ENCODE measurements at regions of chr1 and their contacts with region 1.

Region 1: DNA sequence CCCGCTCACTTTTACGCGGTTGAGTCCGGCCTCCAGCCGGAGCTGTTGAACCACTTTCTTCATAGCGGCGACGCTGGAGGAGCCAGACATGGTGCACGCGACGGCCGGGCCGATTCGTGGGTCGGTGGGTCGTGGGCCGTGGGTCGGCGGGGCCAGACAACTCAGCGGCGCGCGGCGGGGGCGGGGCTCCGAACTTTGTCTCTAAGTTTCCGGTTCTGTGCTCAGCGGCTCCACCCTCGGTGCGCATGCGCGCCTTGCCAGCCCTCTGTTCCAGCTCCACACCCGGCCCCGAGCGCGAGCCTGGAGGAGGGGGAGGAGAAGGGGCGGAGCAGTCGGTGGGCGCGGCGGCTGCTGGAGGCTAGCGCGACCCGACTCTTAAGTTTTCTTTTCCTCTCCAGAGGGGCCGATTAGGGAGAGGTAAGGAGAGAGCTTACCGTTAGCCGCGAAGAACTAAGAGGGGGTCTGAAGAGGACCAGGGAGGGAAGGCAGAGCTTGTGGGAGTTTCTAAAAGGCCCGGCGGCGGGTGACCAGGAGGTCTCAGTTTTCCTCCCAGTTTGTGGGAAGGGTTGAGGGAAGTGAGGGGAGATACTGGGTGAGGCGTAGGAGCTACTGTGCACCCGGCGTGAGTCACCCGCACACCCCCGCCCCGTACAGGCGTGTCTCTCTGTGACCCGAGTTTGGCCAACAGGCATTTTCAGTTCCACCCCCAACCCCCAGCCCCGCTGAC is at the starts of genes GNG5 and SPATA1:
- DNase-seq: peak; percentile 99
- ATAC-seq: peak; percentile 91
- H3K4me3 Mint-ChIP-seq: peak within 1 kb of the TSS; percentile 96
- H3K27ac Mint-ChIP-seq: peak within 1 kb of the TSS; percentile 100
- H3K4me1 Mint-ChIP-seq: peaks cover 29% of the 10 kb centered on the region
- H3K27me3 Mint-ChIP-seq: no peaks in the 10 kb centered on the region
- total RNA-seq, gene GNG5: 124 to 159 TPM
- total RNA-seq, gene SPATA1: 0.61 to 1.4 TPM

Region 2: DNA sequence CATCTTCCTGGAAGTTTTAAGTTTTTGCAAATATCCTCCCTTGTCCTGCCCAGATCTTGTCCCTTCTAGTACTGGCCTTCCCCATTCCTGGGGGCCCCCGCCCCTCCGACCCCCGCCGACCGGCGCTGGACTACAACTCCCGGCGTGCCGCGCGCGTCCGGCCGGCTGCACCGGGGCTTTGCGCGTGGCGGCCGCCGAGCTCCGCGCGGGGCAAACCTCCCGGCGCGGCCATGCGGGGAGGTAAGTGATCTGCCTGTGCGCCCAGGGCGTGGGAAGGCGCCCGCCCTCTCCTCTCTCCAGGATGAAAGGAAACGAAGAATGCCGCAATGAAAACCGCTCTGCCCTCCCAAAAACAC is 207.9 kb before region 1 on chr1:
- CTCF ChIA-PET with region 1: no interaction called
- POLR2A ChIA-PET with region 1: no interaction called
- intact Hi-C with region 1: loop called in 1 of 2 experiments (anchors 2 kb)
- DNase-seq: peak; percentile 71
- ATAC-seq: peak; percentile 79
- H3K4me3 Mint-ChIP-seq: peak overlapping the region; percentile 78
- H3K27ac Mint-ChIP-seq: peak overlapping the region; percentile 71
- H3K4me1 Mint-ChIP-seq: peaks cover 34% of the 10 kb centered on the region
- H3K27me3 Mint-ChIP-seq: peaks cover 6% of the 10 kb centered on the region

Region 3: DNA sequence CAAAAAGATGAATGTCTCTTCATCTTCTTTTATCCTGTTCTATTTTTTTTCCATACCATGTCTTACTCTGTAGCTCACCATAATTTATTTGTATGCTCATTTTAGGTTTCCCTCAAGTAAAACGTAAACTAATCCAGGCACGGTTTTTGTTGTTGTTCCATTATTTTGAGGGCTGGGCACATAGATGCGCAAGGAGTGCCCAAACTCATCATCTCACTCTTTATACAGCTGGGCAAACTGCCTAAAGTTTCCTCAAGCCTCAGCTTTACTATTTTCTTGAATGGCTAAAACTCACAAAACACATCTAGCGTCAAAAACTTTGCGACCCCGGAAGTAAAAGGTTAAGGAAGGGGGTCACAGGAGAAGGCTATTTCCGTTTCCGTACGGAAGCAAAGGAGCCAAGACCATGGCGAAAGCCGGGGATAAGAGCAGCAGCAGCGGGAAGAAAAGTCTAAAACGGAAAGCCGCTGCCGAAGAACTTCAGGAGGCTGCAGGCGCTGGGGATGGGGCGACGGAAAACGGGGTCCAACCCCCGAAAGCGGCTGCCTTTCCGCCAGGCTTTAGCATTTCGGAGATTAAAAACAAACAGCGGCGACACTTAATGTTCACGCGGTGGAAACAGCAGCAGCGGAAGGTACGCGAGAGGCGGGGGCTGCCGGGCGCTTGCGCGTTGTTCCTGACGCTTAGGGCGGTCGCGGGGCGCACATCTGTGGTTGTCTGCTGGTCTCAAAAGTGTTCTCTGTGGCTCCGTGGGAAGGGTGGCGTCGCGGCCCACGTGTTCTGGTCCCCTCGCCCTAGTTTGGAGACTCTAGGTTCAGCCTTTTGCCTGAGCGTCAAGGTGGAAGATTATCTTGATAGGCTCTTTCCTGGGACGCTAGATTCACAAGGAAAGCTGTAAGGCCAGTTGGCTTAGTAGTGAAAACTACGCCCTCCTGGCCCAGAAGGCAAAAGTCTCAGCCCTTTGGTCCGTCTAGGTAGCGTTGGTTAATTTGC is 27.0 kb before region 1 on chr1 and contains the start of gene RPF1:
- CTCF ChIA-PET with region 1: interaction called, 5 read pairs
- POLR2A ChIA-PET with region 1: interaction called, 6 read pairs
- intact Hi-C with region 1: loop called (anchors 1 kb)
- DNase-seq: peak; percentile 86
- ATAC-seq: peak; percentile 92
- H3K4me3 Mint-ChIP-seq: peak within 1 kb of the TSS; percentile 92
- H3K27ac Mint-ChIP-seq: peak within 1 kb of the TSS; percentile 98
- H3K4me1 Mint-ChIP-seq: peaks cover 40% of the 10 kb centered on the region
- H3K27me3 Mint-ChIP-seq: peaks cover 17% of the 10 kb centered on the region
- total RNA-seq, gene RPF1: 59.1 to 70.2 TPM

Region 4: GRCh38 chr1:84598846-84599741 is 92.9 kb after region 1 on chr1:
- CTCF ChIA-PET with region 1: interaction called, 3 read pairs
- POLR2A ChIA-PET with region 1: interaction called, 3 read pairs
- intact Hi-C with region 1: loop called in 1 of 2 experiments (anchors 1 kb)
- DNase-seq: no peak
- ATAC-seq: peak; percentile 88
- H3K4me3 Mint-ChIP-seq: peak overlapping the region; percentile 30
- H3K27ac Mint-ChIP-seq: peak overlapping the region; percentile 86
- H3K4me1 Mint-ChIP-seq: peaks cover 32% of the 10 kb centered on the region
- H3K27me3 Mint-ChIP-seq: no peaks in the 10 kb centered on the region

Region 5: DNA sequence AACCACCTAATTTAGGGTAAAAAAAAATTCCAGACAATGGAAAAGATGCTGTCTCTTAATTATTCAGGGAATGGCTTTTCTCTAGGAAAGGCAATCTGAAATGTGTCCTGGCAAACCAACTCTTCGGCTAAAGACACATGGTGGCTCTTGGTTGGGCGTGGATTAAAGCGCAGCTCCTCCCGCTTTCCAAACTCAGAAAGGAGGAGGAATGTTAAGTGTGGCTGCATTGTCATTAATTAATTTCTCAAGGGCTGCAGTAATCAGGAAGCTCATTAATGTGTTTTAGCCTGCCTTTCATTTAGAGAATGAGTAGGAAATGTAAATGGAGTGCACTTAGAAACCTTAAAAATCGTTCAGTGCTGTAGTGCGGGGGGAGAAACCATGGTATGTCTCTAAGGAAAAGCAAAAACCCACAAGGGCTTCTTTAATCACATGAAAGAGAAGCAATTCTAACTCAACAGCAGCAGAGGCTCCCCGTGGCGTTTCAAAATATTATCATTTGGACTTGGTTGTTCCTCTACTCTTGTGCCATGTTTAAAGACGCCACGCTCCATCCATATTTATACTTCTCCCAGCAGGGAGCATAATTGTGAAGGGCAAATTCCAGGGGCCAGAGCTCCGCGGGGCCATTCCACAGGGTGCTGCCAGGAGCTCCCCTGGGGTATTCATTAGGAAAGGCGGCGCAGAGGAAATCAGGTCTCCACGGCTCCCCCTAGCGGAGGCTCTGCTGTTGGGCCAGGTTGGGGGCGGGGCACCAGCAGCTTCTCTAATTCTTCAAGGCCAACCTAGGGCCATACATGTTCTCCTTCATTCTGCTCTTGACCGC is 276.0 kb after region 1 on chr1:
- CTCF ChIA-PET with region 1: no interaction called
- POLR2A ChIA-PET with region 1: no interaction called
- intact Hi-C with region 1: no loop called
- DNase-seq: peak; percentile 89
- ATAC-seq: peak; percentile 89
- H3K4me3 Mint-ChIP-seq: peak overlapping the region; percentile 57
- H3K27ac Mint-ChIP-seq: no peak overlapping the region
- H3K4me1 Mint-ChIP-seq: peaks cover 22% of the 10 kb centered on the region
- H3K27me3 Mint-ChIP-seq: no peaks in the 10 kb centered on the region

Region 6: GRCh38 chr1:84996846-84997666 is 490.9 kb after region 1 on chr1 and contains the start of gene MCOLN2:
- CTCF ChIA-PET with region 1: no interaction called
- POLR2A ChIA-PET with region 1: no interaction called
- intact Hi-C with region 1: loop called in 1 of 2 experiments (anchors 10 kb)
- DNase-seq: peak; percentile 75
- ATAC-seq: peak; percentile 54
- H3K4me3 Mint-ChIP-seq: peak within 1 kb of the TSS; percentile 80
- H3K27ac Mint-ChIP-seq: peak within 1 kb of the TSS; percentile 81
- H3K4me1 Mint-ChIP-seq: peaks cover 45% of the 10 kb centered on the region
- H3K27me3 Mint-ChIP-seq: peaks cover 22% of the 10 kb centered on the region
- total RNA-seq, gene MCOLN2: 32.9 to 43.5 TPM

Region 7: DNA sequence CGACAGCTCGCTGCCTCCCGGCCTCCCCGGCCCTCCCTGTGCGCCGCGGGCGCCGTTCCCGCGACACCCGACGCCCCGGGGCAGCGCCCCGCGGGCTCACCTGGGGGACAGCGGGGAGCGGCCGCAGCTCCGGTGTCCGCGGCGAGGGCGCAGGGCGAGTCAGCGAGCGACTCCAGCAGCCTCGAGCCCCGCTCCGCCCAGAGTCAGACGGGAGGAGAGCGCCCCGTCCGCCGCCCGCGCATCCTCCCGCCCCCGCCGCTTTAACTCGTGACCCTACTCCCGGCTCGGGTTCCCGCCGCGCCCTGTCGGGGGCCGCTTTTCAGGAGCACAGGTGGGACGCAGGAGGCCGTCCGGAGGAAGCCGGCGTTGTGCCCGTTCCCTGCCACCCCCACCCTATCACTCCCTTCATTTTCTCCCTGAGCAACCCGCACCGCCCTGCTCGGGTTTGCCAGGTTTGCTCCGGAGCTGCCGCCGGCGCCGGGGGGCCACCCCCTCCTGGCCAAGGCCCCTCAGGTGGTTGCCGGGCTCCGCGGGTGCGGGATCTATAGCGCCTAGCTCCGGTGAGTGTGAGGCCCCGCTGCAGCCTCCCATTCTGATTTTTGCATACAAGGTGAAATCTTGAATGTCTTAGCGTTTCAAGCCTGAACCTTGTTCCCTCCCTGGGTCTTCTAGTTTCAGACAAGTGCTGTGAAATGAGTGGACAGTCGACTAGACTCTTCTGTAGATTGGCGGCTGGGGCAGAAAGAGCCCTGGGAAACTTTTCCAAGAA is 542.3 kb after region 1 on chr1 and contains the start of gene MCOLN3:
- CTCF ChIA-PET with region 1: no interaction called
- POLR2A ChIA-PET with region 1: no interaction called
- intact Hi-C with region 1: no loop called
- DNase-seq: peak; percentile 62
- ATAC-seq: peak; percentile 60
- H3K4me3 Mint-ChIP-seq: peak within 1 kb of the TSS; percentile 62
- H3K27ac Mint-ChIP-seq: no peak within 1 kb of the TSS
- H3K4me1 Mint-ChIP-seq: peaks cover 21% of the 10 kb centered on the region
- H3K27me3 Mint-ChIP-seq: peaks cover 48% of the 10 kb centered on the region
- total RNA-seq, gene MCOLN3: 0.16 to 0.23 TPM

Region 8: GRCh38 chr1:85276215-85276977 is 770.2 kb after region 1 on chr1 and contains the start of gene BCL10:
- CTCF ChIA-PET with region 1: no interaction called
- POLR2A ChIA-PET with region 1: no interaction called
- intact Hi-C with region 1: loop called in 1 of 2 experiments (anchors 10 kb)
- DNase-seq: peak; percentile 99
- ATAC-seq: peak; percentile 97
- H3K4me3 Mint-ChIP-seq: peak within 1 kb of the TSS; percentile 84
- H3K27ac Mint-ChIP-seq: peak within 1 kb of the TSS; percentile 94
- H3K4me1 Mint-ChIP-seq: peaks cover 52% of the 10 kb centered on the region
- H3K27me3 Mint-ChIP-seq: peaks cover 4% of the 10 kb centered on the region
- total RNA-seq, gene BCL10: 28.3 to 28.8 TPM

Region 9: GRCh38 chr1:85297855-85298629 is 791.9 kb after region 1 on chr1:
- CTCF ChIA-PET with region 1: no interaction called
- POLR2A ChIA-PET with region 1: no interaction called
- intact Hi-C with region 1: no loop called
- DNase-seq: peak; percentile 88
- ATAC-seq: peak; percentile 93
- H3K4me3 Mint-ChIP-seq: peak overlapping the region; percentile 56
- H3K27ac Mint-ChIP-seq: peak overlapping the region; percentile 72
- H3K4me1 Mint-ChIP-seq: peaks cover 26% of the 10 kb centered on the region
- H3K27me3 Mint-ChIP-seq: peaks cover 30% of the 10 kb centered on the region

Measured in activated CD4-positive, alpha-beta T cell treated with anti-CD3 and anti-CD28 coated beads for 36 hours (primary cell).